Lower leg skin (tissue), 4 donors: ENCODE measurements at regions of chr17 and their contacts with region 1.

Region 1: DNA sequence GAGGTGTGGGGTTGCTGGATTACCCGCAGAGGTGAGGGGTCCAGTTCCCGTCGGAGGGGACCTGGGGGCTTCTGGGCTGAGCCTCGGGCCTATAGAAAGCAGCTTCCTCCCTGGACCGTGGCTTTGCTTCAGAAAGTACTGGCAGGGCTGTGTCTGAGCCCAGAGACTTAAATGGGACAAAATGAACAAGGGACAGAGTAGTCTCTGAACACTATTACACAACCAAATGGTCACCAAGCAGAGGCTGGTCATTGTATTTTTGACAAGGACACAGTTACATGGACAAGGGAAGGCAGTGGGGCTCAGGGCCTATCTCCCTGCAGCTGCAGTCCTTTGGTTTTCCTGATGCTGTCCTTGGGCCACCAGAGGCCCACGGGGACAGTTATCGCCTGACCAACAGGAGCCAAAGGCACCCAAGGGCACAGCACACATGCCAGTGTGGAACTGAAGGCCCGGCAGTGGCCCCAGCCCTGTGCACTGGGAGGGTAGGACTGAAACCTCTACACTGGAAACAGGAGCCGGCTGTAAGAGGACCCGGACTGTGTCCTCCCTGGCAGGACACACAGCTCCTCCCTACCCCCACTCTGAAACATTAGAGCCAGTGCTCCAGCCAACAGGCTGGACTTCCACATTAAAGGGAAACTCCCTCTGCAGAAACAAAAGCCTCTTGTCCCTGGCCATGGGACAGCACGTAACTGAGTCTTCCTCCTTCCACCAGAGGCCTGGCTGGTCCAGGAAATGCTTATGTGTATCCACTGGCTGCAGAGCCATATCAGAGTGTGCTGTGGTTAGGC is 26.0 kb upstream of the ERN1 start:
- DNase-seq: peak; percentile 58 to 87
- H3K4me3 ChIP-seq: no peak overlapping the region
- CTCF ChIP-seq: no peak
- POLR2A ChIP-seq: no peak

Region 2: GRCh38 chr17:64133546-64134215 is 22.3 kb before region 1 on chr17:
- intact Hi-C with region 1: no loop called
- DNase-seq: peak in 1 of 2 donors; percentile 79
- H3K4me3 ChIP-seq: no peak overlapping the region
- CTCF ChIP-seq: peak in 1 of 3 donors; percentile 32
- POLR2A ChIP-seq: no peak

Region 3: DNA sequence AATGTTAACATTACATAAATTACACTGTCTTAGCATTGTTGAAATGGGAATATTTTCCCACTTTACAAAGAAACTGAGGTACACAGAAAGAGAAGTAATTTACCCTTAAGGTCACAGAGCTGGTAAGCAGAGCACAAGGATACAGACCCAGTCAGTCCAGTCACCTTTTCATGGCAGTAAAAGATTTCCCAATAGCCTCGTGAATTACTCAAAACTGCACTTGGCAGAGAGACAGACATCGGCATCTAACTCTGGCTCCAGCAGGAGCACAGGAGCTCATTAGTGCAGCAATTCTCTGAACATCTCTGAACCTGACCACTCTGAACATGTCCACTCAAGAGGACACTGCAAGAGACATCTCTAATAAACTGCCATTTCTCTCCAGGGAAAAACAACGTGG is 104.0 kb after region 1 on chr17:
- intact Hi-C with region 1: loop called (anchors 10 kb)
- DNase-seq: no peak
- H3K4me3 ChIP-seq: no peak overlapping the region
- CTCF ChIP-seq: no peak
- POLR2A ChIP-seq: no peak

Region 4: DNA sequence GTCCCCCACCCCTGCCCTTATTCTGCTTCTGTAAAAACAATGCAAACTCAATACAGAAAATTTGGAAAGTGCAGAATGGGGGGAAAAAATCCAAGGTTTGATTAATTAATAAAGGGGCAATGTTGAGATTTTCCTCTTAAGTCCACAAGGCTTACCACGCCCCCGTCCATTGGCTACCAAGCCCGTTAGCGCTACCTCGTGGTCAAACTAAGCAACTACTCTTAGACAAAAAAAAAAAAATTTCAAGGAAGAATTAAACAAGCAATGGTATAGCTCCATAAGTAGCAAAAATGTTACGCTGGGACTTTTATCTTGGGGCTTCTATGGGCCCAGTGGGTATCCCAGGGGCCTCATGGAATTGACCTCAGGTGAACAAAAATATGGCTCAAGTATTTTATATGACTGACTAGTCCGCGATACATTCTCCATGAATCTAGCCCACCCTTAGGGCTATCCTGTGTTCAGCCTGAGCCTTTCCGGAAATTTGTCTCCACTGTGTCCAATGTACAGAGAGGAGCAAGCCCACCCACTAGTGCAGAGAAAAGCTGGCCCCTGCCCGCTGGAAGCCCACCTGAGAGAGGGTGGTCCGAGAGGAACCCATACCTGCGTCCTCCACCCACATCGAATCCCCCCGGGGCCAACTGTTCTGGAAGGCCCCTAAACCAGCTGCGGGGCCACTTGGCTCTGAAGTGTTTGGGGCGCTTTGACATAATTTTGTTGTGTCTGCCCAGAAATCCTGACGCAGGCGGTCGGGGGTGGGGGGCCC is 126.2 kb after region 1 on chr17:
- intact Hi-C with region 1: loop called (anchors 10 kb)
- DNase-seq: peak in 1 of 2 donors; percentile 31
- H3K4me3 ChIP-seq: no peak overlapping the region
- CTCF ChIP-seq: peak in 1 of 3 donors; percentile 56
- POLR2A ChIP-seq: no peak